ENCODE measurements at regions of chr17 and their contacts with region 1.

Region 1: GRCh38 chr17:45218895-45219661 is 2.6 kb upstream of the FMNL1 start:
- DNase-seq: peak; percentile 57 to 80
- H3K4me3 ChIP-seq: no peak overlapping the region
- H3K27ac ChIP-seq: no peak overlapping the region
- H3K4me1 ChIP-seq: peaks cover 8% of the 10 kb centered on the region; the same call in 1 of the 2 replicates
- H3K27me3 ChIP-seq: no peaks in the 10 kb centered on the region
- CTCF ChIP-seq: peak; percentile 98

Region 2: DNA sequence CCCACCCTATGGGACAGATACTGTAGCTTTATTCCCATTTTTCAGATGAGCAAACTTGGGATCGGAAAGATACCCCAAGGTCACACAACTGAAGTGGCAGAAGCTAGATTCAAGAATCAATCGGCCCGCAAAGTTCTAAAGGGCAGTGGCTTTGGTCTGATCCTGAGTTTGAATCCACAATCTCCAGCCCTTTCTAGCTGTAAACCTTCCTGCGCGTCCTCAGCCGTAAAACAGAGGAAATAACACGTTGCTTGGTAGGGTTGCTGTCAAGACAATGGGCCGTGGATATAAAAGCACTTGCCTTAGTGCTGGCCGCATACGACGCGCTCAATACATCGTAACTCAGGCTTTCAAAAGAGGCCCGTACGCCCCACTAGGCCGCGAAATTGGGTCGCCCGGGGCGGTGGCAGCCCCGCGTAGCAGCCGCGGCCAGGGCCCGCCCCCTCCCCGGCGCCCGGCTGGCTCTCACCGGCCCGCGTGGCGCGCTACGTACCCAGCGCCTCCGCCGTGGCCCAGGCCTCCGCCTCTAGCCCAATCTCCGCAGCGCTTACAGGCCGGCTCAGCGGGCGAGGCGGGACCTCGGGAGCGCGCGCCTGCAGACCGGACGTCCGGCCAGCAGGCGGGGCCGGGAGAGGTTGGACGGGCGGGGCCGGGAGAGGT is 167.9 kb before region 1 on chr17 and contains the start of gene DCAKD:
- CTCF ChIA-PET with region 1: no interaction called
- POLR2A ChIA-PET with region 1: no interaction called
- intact Hi-C with region 1: no loop called
- DNase-seq: peak; percentile 88 to 95
- H3K4me3 ChIP-seq: peak within 1 kb of the TSS; percentile 98
- H3K27ac ChIP-seq: peak within 1 kb of the TSS; percentile 92
- H3K4me1 ChIP-seq: peaks cover 26% of the 10 kb centered on the region
- H3K27me3 ChIP-seq: no peaks in the 10 kb centered on the region
- CTCF ChIP-seq: no peak
- total RNA-seq, gene DCAKD: 57.9 and 68.8 TPM in 2 replicates

Region 3: GRCh38 chr17:45161019-45161825 is 57.9 kb before region 1 on chr17:
- CTCF ChIA-PET with region 1: no interaction called
- POLR2A ChIA-PET with region 1: interaction called, 14 read pairs
- intact Hi-C with region 1: no loop called
- DNase-seq: peak; percentile 98 to 99
- H3K4me3 ChIP-seq: peak overlapping the region; percentile 73
- H3K27ac ChIP-seq: peak overlapping the region; percentile 93
- H3K4me1 ChIP-seq: peaks cover 55% of the 10 kb centered on the region
- H3K27me3 ChIP-seq: no peaks in the 10 kb centered on the region
- CTCF ChIP-seq: no peak; the same call in 1 of the 2 replicates

Region 4: GRCh38 chr17:45235416-45236281 is 16.6 kb after region 1 on chr17:
- CTCF ChIA-PET with region 1: interaction called, 17 read pairs
- POLR2A ChIA-PET with region 1: no interaction called
- intact Hi-C with region 1: no loop called
- DNase-seq: peak in 1 of 2 experiments; percentile 60
- H3K4me3 ChIP-seq: no peak overlapping the region
- H3K27ac ChIP-seq: no peak overlapping the region
- H3K4me1 ChIP-seq: peaks cover 12% of the 10 kb centered on the region
- H3K27me3 ChIP-seq: no peaks in the 10 kb centered on the region
- CTCF ChIP-seq: peak; percentile 92

Region 5: GRCh38 chr17:45385331-45385997 is 166.4 kb after region 1 on chr17:
- CTCF ChIA-PET with region 1: interaction called, 4 read pairs
- POLR2A ChIA-PET with region 1: no interaction called
- intact Hi-C with region 1: loop called (anchors 2 kb)
- DNase-seq: peak; percentile 65 to 85
- H3K4me3 ChIP-seq: no peak overlapping the region
- H3K27ac ChIP-seq: no peak overlapping the region
- H3K4me1 ChIP-seq: peaks cover 22% of the 10 kb centered on the region
- H3K27me3 ChIP-seq: no peaks in the 10 kb centered on the region
- CTCF ChIP-seq: peak; percentile 100

Region 6: DNA sequence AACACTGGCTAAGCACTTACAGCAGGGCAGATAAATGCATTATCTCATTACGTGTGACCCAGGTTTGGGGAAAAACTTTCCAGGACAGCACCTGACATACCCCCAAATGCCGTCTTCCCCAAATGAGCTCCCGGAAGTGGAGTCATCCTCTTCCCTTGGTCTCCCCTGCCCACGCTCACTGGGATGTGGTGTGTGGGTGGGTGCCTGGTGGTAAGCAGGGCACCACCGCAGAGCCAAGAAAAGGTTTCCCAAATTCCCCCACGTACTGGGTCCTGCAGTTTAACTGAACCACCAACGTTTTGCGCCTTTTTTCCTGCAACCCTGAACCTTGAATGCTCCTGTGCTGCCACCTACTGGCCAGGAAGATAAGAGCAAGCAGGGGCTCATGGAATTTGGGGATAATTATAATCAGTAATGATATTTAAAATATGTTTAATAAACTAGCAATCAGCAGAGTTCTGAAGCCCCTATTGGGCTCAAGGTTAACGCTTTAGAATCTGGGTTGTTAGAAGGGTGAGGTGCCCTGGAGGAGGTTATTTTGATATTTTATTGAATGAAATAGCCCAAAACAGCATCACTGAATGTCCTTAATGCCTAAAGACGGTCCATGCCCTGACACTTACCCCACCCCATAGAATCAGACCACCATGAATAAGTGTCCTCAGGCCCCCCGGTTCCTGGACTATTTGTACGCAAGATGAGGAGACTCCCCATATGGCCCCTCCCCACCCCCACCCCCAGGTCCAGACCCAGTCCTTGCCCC is 633.6 kb after region 1 on chr17:
- CTCF ChIA-PET with region 1: interaction called, 4 read pairs
- POLR2A ChIA-PET with region 1: no interaction called
- intact Hi-C with region 1: loop called (anchors 1 kb)
- DNase-seq: peak in 1 of 2 experiments; percentile 64
- H3K4me3 ChIP-seq: no peak overlapping the region
- H3K27ac ChIP-seq: no peak overlapping the region
- H3K4me1 ChIP-seq: no peaks in the 10 kb centered on the region
- H3K27me3 ChIP-seq: peaks cover 74% of the 10 kb centered on the region
- CTCF ChIP-seq: peak; percentile 99